ENCODE measurements at regions of chr10 and their contacts with region 1.

Region 1: GRCh38 chr10:125871338-125871737 is 9.8 kb downstream of the DHX32 start:
- DNase-seq: no peak
- H3K4me3 ChIP-seq: no peak overlapping the region
- H3K27ac ChIP-seq: no peak overlapping the region
- H3K4me1 ChIP-seq: no peaks in the 10 kb centered on the region
- H3K27me3 ChIP-seq: no peaks in the 10 kb centered on the region
- CTCF ChIP-seq: no peak
- POLR2A ChIP-seq: no peak

Region 2: GRCh38 chr10:125843603-125844329 is 27.6 kb before region 1 on chr10:
- intact Hi-C with region 1: loop called (anchors 2 kb)
- DNase-seq: no peak
- H3K4me3 ChIP-seq: no peak overlapping the region
- H3K27ac ChIP-seq: no peak overlapping the region
- H3K4me1 ChIP-seq: no peaks in the 10 kb centered on the region
- H3K27me3 ChIP-seq: no peaks in the 10 kb centered on the region
- CTCF ChIP-seq: no peak
- POLR2A ChIP-seq: no peak

Region 3: DNA sequence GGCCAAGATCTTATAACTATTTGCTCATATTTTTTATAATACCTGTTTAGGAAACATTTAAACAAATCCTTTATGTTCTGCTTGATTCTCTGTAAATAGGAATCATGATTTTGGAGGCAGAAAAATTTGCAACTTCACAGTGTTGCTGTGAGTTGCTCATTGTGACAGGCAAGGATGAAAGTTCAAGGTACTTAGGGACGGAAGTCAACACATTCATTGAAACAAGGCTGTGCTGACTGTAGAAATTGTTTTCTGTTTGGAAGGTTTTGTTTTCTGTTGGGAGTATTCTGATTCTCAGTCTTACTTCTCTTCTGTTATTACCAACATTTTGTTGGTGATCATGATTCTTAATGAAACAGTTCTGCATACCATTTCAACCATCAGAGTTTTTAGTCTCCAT is 80.0 kb after region 1 on chr10:
- intact Hi-C with region 1: no loop called
- DNase-seq: no peak
- H3K4me3 ChIP-seq: no peak overlapping the region
- H3K27ac ChIP-seq: no peak overlapping the region
- H3K4me1 ChIP-seq: no peaks in the 10 kb centered on the region
- H3K27me3 ChIP-seq: no peaks in the 10 kb centered on the region
- CTCF ChIP-seq: no peak
- POLR2A ChIP-seq: no peak

Measured in breast epithelium (tissue), 4 donors.